Calu3 (cell line): ENCODE measurements at regions of chr1 and their contacts with region 1.

Region 1: DNA sequence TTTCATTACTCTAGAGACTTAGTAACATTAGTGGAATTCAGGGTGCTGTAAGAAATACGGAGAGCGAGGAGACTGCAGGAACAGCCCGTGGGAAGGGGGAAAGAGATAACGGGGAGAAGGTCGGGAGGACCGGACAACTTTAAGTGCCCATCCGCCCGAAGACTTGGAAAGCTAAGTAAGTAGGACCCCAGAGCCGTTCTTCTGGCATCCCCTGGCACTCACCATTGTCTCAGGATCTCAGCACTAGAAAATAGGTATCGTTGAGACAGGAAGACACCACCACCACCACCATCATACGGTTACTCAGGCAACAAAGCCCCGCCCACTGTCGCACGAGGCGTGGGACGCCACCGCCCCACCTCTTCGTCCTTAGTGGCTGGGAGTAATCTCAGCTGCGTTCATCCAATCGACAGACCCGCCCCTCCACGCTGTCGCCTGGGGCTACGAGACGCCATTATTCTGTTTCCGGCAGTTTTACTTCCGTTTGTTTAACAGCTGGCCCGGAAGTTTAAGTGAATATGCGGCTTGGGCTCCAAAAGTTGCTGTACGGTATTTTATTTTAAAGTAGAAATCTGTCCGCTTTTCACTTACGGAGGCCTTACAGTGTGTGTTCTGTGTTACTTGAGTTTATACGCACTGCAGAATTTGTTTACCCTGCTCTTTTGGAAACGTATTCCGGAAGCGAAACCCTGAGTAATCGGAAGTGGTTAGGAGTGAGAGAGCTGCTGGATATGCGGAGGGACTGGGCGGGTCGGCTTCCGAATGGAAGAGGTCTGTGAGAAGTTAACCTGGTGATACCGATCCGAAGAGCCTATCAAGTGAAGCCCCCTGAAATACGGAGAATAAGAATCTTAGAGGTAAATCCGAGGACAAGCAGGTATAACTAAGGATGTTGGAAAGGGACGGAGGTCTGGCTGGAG is at the starts of genes BLZF1 and NME7:
- DNase-seq: peak; percentile 98
- H3K4me3 Mint-ChIP-seq: no peak within 1 kb of the TSS
- H3K27ac Mint-ChIP-seq: no peak within 1 kb of the TSS
- H3K4me1 Mint-ChIP-seq: peaks cover 20% of the 10 kb centered on the region
- H3K27me3 Mint-ChIP-seq: no peaks in the 10 kb centered on the region
- CTCF ChIP-seq: no peak
- total RNA-seq, gene BLZF1: 45.7 and 55.5 TPM in 2 replicates
- total RNA-seq, gene NME7: 25.2 and 33.2 TPM in 2 replicates

Region 2: DNA sequence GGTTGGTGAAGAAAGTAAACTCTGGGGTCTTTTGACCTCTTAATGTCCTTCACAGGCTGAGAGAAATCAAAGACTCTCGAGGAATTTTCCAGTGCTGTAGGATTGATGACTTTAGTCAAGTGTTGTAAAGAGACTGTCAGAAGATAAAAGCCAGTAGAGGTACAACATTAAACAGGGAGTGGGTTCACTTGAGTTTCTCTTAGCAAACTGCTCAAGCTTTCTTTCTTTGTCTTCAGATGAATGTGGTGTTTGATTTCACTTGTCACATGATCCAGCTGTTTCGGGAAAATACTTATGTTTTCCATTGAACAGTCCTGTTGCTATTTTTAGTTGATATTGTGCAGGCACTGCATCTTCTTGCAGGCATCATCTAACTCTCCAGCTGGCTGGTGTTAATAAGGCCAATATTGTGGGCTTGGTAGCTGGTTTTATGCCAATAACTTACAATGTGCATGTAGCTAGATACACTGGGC is 869.6 kb before region 1 on chr1:
- CTCF ChIA-PET with region 1: no interaction called
- intact Hi-C with region 1: loop called (anchors 5 kb)
- DNase-seq: no peak
- H3K4me3 Mint-ChIP-seq: no peak overlapping the region
- H3K27ac Mint-ChIP-seq: no peak overlapping the region
- H3K4me1 Mint-ChIP-seq: peaks cover 64% of the 10 kb centered on the region
- H3K27me3 Mint-ChIP-seq: no peaks in the 10 kb centered on the region
- CTCF ChIP-seq: no peak

Region 3: GRCh38 chr1:169460191-169460833 is 92.6 kb after region 1 on chr1:
- CTCF ChIA-PET with region 1: no interaction called
- intact Hi-C with region 1: loop called (anchors 5 kb)
- DNase-seq: peak; percentile 75
- H3K4me3 Mint-ChIP-seq: peak overlapping the region; percentile 78
- H3K27ac Mint-ChIP-seq: peak overlapping the region; percentile 72
- H3K4me1 Mint-ChIP-seq: peaks cover 12% of the 10 kb centered on the region
- H3K27me3 Mint-ChIP-seq: no peaks in the 10 kb centered on the region
- CTCF ChIP-seq: no peak